ENCODE measurements at regions of chr1 and their contacts with region 1.

Region 1: DNA sequence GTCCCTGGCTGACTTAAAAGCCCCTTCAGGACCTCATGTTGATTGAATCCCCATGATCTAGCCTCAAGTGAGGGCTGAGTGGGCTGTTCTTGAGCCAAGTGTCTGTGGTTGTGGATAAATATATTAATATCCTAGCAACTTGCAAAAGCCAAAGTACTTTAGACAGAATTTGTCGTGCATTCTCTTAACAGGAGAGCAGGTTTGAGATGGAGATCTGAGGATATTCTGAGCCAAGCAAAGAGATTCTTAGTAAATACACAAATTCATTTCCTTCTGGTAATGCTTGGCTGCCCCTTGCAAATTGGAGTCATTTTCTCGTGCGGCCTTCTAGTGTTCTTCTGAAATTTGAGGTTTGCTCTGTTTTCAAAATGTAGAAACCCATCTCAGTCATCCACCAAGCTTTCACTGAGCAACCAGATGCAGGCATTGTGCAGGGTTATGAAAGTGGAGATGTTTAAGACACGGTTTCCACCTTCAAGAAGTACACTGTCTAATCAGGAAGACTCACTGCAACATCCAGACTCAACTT is 242.1 kb upstream of the JUN start:
- DNase-seq: no peak
- ATAC-seq: peak; percentile 71
- H3K4me3 Mint-ChIP-seq: peak overlapping the region; percentile 52
- H3K27ac Mint-ChIP-seq: peak overlapping the region; percentile 93
- H3K4me1 Mint-ChIP-seq: peaks cover 20% of the 10 kb centered on the region
- H3K27me3 Mint-ChIP-seq: no peaks in the 10 kb centered on the region
- CTCF ChIP-seq: no peak

Region 2: DNA sequence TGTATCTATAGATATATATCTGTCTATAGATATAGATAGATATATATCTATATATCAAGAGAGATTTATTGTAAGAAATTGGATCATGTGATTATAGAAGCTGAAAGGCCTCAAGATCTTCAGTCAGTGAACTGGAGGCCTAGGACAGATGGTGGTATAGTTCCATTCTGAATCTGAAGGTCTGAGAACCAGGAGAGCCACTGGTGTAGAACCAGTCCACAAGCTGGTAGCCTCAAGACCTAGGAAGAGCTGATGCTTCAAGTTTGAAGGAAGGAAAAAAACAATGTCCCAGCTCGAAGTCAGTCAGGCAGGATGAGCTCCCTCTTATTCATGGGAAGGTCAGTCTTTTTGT is 28.9 kb before region 1 on chr1:
- CTCF ChIA-PET with region 1: no interaction called
- POLR2A ChIA-PET with region 1: no interaction called
- intact Hi-C with region 1: no loop called
- DNase-seq: no peak
- ATAC-seq: no peak
- H3K4me3 Mint-ChIP-seq: no peak overlapping the region
- H3K27ac Mint-ChIP-seq: no peak overlapping the region
- H3K4me1 Mint-ChIP-seq: peaks cover 16% of the 10 kb centered on the region
- H3K27me3 Mint-ChIP-seq: no peaks in the 10 kb centered on the region
- CTCF ChIP-seq: no peak

Region 3: DNA sequence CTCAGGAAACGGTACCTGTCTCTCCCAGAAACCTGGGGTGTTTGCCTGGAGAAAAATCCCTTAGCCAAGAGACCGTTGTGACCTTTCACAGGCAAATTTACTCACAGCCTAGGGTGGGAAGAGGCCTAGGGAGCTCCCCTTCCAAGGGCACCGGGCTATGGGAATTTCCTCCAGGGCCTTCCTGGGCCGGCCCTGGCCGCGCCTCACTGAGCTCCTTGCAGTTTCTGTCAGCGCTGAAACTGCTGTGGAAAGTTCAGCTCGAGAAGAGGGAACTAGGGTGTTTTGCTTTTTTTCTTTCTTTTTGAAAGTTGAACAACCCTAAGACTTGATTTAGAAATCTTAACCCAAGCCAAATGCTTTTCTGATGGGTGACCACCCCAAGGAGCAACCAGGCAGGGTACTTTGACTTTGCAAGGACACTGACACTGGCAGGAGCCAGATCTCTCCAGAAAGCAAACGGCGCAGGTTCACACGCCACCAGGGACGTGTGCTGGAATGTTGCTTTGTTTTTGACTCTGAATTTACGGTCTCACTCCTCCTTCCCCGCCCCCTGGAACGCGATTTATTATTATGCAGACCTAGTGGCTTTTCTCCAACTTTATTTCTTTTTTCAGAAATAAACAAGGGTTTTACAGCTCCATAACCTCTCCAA is 12.6 kb before region 1 on chr1:
- CTCF ChIA-PET with region 1: interaction called, 3 read pairs
- POLR2A ChIA-PET with region 1: interaction called, 10 read pairs
- intact Hi-C with region 1: no loop called
- DNase-seq: peak; percentile 45
- ATAC-seq: peak; percentile 72
- H3K4me3 Mint-ChIP-seq: peak overlapping the region; percentile 73
- H3K27ac Mint-ChIP-seq: peak overlapping the region; percentile 91
- H3K4me1 Mint-ChIP-seq: peaks cover 76% of the 10 kb centered on the region
- H3K27me3 Mint-ChIP-seq: no peaks in the 10 kb centered on the region
- CTCF ChIP-seq: no peak

Measured in activated B cell treated with CpG ODN at 0.5 μM for 24 hours (primary cell).